ENCODE measurements at regions of chr19 and their contacts with region 1.

Region 1: DNA sequence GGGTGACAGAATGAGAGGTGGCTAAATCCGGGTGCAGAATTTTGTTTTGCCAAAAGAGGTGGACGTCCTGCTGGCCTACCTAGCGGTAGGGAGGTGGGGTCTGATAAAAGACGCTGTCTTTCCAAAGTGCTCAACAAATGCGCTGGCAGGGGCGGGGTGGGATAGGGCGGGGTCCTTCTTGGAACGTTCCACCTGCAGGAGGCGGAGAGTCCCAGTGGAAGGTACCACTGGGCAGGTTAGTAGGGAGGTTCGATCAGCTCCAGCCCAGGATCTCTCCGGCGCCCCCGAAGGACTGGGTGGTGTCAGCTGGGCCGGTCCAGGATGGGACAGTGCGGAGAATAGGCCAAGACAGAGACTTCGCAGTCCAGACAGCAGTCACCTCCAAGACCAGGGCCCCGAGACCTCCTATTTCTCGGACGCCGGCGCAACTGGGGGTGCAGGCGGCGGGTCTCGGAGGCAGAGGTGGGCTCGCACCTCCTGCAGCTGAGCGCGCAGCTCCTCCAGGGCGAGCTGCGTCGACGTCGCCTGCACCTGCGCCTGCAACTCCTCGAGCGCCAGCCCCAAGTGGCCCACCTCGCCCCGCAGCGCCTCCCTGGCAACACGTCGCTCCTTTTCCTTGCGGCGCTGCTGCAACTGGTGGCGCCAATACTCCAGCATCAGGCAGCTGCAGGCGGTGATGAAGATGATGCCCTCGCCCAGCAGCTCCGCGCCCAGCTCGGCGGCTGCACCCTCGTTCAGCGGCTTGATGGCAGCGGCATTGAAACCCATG is 21.6 kb downstream of the VASP start:
- DNase-seq: peak; percentile 82 to 85
- H3K4me3 ChIP-seq: peak overlapping the region; percentile 80
- H3K27ac ChIP-seq: peak overlapping the region; percentile 88
- H3K4me1 ChIP-seq: peaks cover 24% of the 10 kb centered on the region
- H3K27me3 ChIP-seq: no peaks in the 10 kb centered on the region
- CTCF ChIP-seq: peak; percentile 34; the same call in 1 of the 2 replicates

Region 2: GRCh38 chr19:44757735-44758505 is 770.9 kb before region 1 on chr19:
- CTCF ChIA-PET with region 1: no interaction called
- POLR2A ChIA-PET with region 1: no interaction called
- intact Hi-C with region 1: no loop called
- DNase-seq: no peak
- H3K4me3 ChIP-seq: no peak overlapping the region
- H3K27ac ChIP-seq: no peak overlapping the region
- H3K4me1 ChIP-seq: peaks cover 26% of the 10 kb centered on the region
- H3K27me3 ChIP-seq: no peaks in the 10 kb centered on the region
- CTCF ChIP-seq: no peak

Region 3: GRCh38 chr19:45323671-45324081 is 205.2 kb before region 1 on chr19:
- CTCF ChIA-PET with region 1: no interaction called
- POLR2A ChIA-PET with region 1: no interaction called
- intact Hi-C with region 1: no loop called
- DNase-seq: no peak
- H3K4me3 ChIP-seq: no peak overlapping the region
- H3K27ac ChIP-seq: no peak overlapping the region
- H3K4me1 ChIP-seq: no peaks in the 10 kb centered on the region; the same call in 1 of the 2 replicates
- H3K27me3 ChIP-seq: no peaks in the 10 kb centered on the region
- CTCF ChIP-seq: no peak

Region 4: GRCh38 chr19:45496349-45496953 is 32.4 kb before region 1 on chr19:
- CTCF ChIA-PET with region 1: no interaction called
- POLR2A ChIA-PET with region 1: no interaction called
- intact Hi-C with region 1: loop called (anchors 2 kb)
- DNase-seq: peak in 1 of 2 experiments; percentile 45
- H3K4me3 ChIP-seq: peak overlapping the region; percentile 92
- H3K27ac ChIP-seq: no peak overlapping the region
- H3K4me1 ChIP-seq: peaks cover 14% of the 10 kb centered on the region; the same call in 1 of the 2 replicates
- H3K27me3 ChIP-seq: no peaks in the 10 kb centered on the region
- CTCF ChIP-seq: no peak

Region 5: DNA sequence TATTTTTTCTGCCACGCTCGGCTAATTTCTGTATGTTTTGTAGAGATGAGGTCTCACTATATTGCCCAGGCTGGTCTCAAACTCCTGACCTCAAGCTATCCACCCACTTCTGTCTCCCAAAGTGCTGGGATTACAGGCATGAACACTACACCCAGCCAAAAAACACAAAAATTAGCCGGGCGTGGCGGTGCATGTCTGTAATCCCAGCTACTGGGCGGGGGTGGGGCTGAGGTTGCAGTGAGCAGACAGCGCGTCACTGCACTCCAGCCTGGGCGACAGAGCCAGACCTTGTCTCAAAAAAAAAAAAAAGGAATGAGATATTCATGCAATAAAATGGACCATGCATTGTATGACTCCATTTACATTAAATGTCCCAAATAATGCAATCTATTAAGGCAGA is 10.6 kb after region 1 on chr19:
- CTCF ChIA-PET with region 1: no interaction called
- POLR2A ChIA-PET with region 1: interaction called, 15 read pairs
- intact Hi-C with region 1: no loop called
- DNase-seq: no peak
- H3K4me3 ChIP-seq: no peak overlapping the region
- H3K27ac ChIP-seq: no peak overlapping the region
- H3K4me1 ChIP-seq: peaks cover 24% of the 10 kb centered on the region
- H3K27me3 ChIP-seq: no peaks in the 10 kb centered on the region
- CTCF ChIP-seq: no peak

Measured in PC-9 (cell line).